ENCODE measurements at regions of chr16 and their contacts with region 1.

Region 1: GRCh38 chr16:86664533-86665318 is 86.4 kb downstream of the FOXL1 start:
- DNase-seq: no peak
- ATAC-seq: peak; percentile 28 to 88
- H3K4me3 ChIP-seq: no peak overlapping the region
- H3K27ac ChIP-seq: peak overlapping the region; percentile 48
- H3K4me1 ChIP-seq: peaks cover 3% of the 10 kb centered on the region
- H3K27me3 ChIP-seq: no peaks in the 10 kb centered on the region

Region 2: DNA sequence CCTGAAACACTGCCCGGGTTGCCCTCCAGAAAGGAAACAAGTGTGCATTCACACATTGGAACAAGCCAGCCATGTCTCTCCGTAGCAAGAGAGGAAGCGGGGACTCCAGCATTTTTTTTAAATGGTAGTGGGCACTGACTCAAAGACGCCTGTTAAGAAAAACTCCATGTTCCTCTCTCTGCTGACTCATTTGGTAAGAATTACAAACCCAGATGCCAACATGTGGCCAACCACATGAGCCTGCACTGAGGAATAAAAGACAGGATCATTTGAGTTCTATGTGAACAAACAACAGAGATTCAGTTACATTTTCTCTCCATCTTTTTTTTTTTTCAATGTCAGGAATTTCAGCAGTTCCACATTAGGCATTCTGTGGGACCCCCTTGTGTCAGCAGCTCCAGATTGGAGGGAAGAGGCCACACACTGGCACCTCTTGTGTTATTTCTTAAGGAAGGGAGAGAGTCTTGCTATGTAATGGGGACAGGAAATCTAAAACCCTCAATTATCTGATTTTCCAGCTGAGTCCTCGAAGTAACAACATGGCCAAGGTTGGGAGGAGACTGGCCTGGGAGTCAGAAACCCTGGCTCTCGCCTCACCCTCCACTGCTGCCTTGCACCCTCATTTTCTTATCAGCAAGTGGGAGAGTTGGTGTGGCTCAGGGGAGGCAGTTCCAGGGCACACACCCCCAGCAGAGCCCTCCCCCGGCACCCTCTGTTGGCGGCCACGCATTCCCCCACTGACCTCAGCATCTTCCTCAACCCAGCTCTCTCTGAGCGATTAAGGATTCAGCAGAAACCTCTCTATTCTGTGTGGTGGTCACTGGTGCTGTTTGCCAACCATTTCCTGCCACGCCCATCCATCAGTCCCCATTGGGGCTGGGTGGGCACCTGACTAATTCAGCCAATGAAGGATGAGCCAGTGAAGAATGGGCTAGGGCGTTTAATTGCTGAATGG is 86.6 kb after region 1 on chr16:
- intact Hi-C with region 1: loop called in 1 of 4 experiments (anchors 10 kb)
- DNase-seq: no peak
- ATAC-seq: no peak
- H3K4me3 ChIP-seq: no peak overlapping the region
- H3K27ac ChIP-seq: peak overlapping the region; percentile 10
- H3K4me1 ChIP-seq: no peaks in the 10 kb centered on the region
- H3K27me3 ChIP-seq: no peaks in the 10 kb centered on the region

Measured in right cardiac atrium (tissue), 5 donors.